ENCODE measurements at regions of chr5 and their contacts with region 1.

Region 1: GRCh38 chr5:134586866-134587524 is 45.6 kb downstream of the SAR1B start:
- DNase-seq: peak; percentile 52 to 86 (median 75)
- ATAC-seq: peak; percentile 87 to 90 (median 88)
- H3K4me3 ChIP-seq: no peak overlapping the region
- H3K4me3 Mint-ChIP-seq: peak overlapping the region in 2 of 3 donors; percentile 6 to 39
- H3K27ac ChIP-seq: no peak overlapping the region
- H3K27ac Mint-ChIP-seq: peak overlapping the region in 1 of 2 donors; percentile 49
- H3K4me1 ChIP-seq: peaks cover 0 to 11% of the 10 kb centered on the region in 2 experiments
- H3K4me1 Mint-ChIP-seq: peaks cover 8 to 9% (median 9%) of the 10 kb centered on the region in 3 donors
- H3K27me3 ChIP-seq: peaks cover 0 to 4% of the 10 kb centered on the region in 2 experiments
- H3K27me3 Mint-ChIP-seq: no peaks in the 10 kb centered on the region

Region 2: GRCh38 chr5:134304311-134304710 is 282.7 kb before region 1 on chr5:
- CTCF ChIA-PET with region 1: interaction called, 5 to 34 read pairs
- POLR2A ChIA-PET with region 1: no interaction called
- DNase-seq: no peak
- ATAC-seq: no peak
- H3K4me3 ChIP-seq: no peak overlapping the region
- H3K4me3 Mint-ChIP-seq: no peak overlapping the region
- H3K27ac ChIP-seq: no peak overlapping the region
- H3K27ac Mint-ChIP-seq: no peak overlapping the region
- H3K4me1 ChIP-seq: peaks cover 0 to 4% of the 10 kb centered on the region in 2 experiments
- H3K4me1 Mint-ChIP-seq: peaks cover 0 to 2% (median 0%) of the 10 kb centered on the region in 3 donors
- H3K27me3 ChIP-seq: no peaks in the 10 kb centered on the region
- H3K27me3 Mint-ChIP-seq: no peaks in the 10 kb centered on the region

Region 3: GRCh38 chr5:134411546-134412266 is 175.3 kb before region 1 on chr5 and contains the start of gene CDKN2AIPNL:
- CTCF ChIA-PET with region 1: interaction called in 1 of 2 experiments, 11 read pairs
- POLR2A ChIA-PET with region 1: no interaction called
- DNase-seq: peak; percentile 75 to 93 (median 86)
- ATAC-seq: peak; percentile 99 to 100 (median 100)
- H3K4me3 ChIP-seq: peak within 1 kb of the TSS; percentile 83 to 85
- H3K4me3 Mint-ChIP-seq: peak within 1 kb of the TSS; percentile 91 to 93 (median 91)
- H3K27ac ChIP-seq: peak within 1 kb of the TSS; percentile 68
- H3K27ac Mint-ChIP-seq: peak within 1 kb of the TSS; percentile 87 to 92
- H3K4me1 ChIP-seq: peaks cover 11 to 29% of the 10 kb centered on the region in 2 experiments
- H3K4me1 Mint-ChIP-seq: peaks cover 28 to 42% (median 41%) of the 10 kb centered on the region in 3 donors
- H3K27me3 ChIP-seq: no peaks in the 10 kb centered on the region
- H3K27me3 Mint-ChIP-seq: no peaks in the 10 kb centered on the region
- total RNA-seq, gene CDKN2AIPNL: 14.0 to 17.3 (median 15.3) TPM

Region 4: DNA sequence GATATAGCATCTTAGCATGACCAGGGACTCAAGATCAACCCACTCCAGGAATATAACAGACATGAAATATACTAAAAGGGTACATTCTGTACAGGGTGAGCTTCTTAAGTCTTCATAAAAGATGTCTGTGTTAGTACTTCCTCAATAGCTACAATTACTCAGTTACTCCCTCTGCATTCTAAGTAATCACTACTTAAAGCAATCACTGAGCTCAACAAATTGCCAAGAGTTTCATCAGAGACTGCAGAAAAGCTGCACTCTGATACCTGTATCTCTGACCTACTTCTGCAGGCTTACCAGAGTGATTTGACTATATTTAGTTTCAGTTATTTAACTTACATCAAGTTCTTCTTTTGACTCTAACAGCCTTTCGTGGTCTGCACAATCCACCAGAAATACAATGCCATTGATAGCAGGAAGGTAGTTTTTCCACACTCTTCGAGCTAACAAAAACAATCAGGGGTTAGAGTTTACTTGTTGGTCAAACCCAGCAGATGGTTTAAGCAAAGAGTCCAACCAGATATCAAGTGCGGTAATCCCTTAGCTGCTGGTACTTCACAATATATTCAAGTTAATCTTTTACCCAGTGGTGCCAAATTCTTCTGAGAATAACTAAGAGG is 22.3 kb after region 1 on chr5:
- CTCF ChIA-PET with region 1: interaction called in 1 of 2 experiments, 13 read pairs
- POLR2A ChIA-PET with region 1: no interaction called
- DNase-seq: no peak
- ATAC-seq: no peak
- H3K4me3 ChIP-seq: no peak overlapping the region
- H3K4me3 Mint-ChIP-seq: no peak overlapping the region
- H3K27ac ChIP-seq: peak overlapping the region; percentile 31
- H3K27ac Mint-ChIP-seq: peak overlapping the region; percentile 17 to 77
- H3K4me1 ChIP-seq: peaks cover 0 to 3% of the 10 kb centered on the region in 2 experiments
- H3K4me1 Mint-ChIP-seq: peaks cover 0 to 22% (median 14%) of the 10 kb centered on the region in 3 donors
- H3K27me3 ChIP-seq: no peaks in the 10 kb centered on the region
- H3K27me3 Mint-ChIP-seq: no peaks in the 10 kb centered on the region

Region 5: DNA sequence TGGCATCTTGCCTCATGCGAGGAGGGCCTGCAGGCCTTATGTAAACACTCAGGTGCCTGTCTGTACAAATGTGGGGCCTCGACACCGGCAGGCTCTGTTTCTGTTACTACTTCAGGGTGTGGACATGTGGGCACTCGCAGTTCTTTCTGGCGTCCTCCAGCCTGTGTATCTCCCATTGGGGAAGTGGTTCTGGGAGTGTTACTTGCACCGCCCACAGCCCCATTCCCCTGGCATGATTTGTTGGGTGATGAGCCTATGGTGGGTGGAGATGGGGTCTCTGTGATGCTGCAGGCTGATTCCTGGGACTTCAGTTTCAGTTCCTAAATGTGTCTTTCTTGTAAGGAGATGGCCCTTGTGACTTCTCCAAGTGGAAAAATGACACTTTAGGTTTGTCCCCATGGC is 529.2 kb after region 1 on chr5:
- CTCF ChIA-PET with region 1: no interaction called
- POLR2A ChIA-PET with region 1: no interaction called
- DNase-seq: no peak
- ATAC-seq: no peak
- H3K4me3 ChIP-seq: no peak overlapping the region
- H3K4me3 Mint-ChIP-seq: no peak overlapping the region
- H3K27ac ChIP-seq: no peak overlapping the region
- H3K27ac Mint-ChIP-seq: no peak overlapping the region
- H3K4me1 ChIP-seq: no peaks in the 10 kb centered on the region
- H3K4me1 Mint-ChIP-seq: no peaks in the 10 kb centered on the region
- H3K27me3 ChIP-seq: peaks cover 0 to 29% of the 10 kb centered on the region in 2 experiments
- H3K27me3 Mint-ChIP-seq: peaks cover 4 to 9% of the 10 kb centered on the region in 2 donors